H1 (cell line): ENCODE measurements at regions of chr11 and their contacts with region 1.

Region 1: GRCh38 chr11:34840736-34841386 is 75.3 kb downstream of the APIP start:
- DNase-seq: no peak
- H3K4me3 ChIP-seq: no peak overlapping the region
- H3K27ac ChIP-seq: no peak overlapping the region
- H3K4me1 ChIP-seq: peaks cover 0 to 4% (median 0%) of the 10 kb centered on the region in 4 experiments; a peak in 2 of 7 replicates
- H3K27me3 ChIP-seq: no peaks in the 10 kb centered on the region
- CTCF ChIP-seq: peak; percentile 60 to 84 (median 62)
- EP300 ChIP-seq: no peak
- POLR2A ChIP-seq: no peak
- RAD21 ChIP-seq: peak; percentile 51 to 57

Region 2: DNA sequence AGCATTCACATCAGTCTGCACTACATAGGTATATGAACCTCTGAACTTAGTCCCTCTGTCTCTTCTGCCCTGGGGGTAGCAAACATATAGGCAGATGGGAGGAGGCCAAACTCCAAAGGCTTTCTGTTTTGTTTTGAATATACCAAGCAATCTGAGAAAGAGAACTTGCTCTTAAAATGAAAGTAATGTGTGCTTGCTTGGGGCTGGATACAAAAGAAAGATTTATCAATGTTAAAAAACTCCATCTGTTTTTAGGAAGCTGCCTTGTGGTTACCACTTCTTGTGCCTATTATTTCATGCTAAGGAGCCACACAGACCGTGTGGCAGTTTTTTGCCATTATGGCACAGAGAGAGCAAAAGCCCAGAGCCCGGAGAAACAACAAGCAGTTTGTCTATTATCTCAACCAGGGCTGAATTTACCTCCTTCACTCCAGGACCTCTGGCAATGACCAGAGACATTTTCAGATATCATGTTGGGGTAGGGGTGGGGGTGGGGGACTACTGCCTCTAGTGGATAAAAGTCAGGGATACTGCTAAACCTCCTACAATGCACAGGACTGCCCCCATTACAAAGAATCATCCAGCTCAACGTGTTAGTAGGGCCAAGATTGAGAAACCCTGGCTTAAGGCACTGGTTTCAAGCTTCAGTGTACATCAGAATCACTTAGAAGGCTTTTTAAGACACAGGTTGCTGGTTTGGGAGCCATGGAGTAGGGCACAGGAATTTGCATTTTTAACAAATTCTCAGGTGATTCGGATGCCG is 48.9 kb before region 1 on chr11:
- CTCF ChIA-PET with region 1: interaction called, 17 read pairs
- POLR2A ChIA-PET with region 1: no interaction called
- DNase-seq: no peak
- H3K4me3 ChIP-seq: no peak overlapping the region
- H3K27ac ChIP-seq: no peak overlapping the region
- H3K4me1 ChIP-seq: peaks cover 0 to 5% (median 3%) of the 10 kb centered on the region in 4 experiments; a peak in 2 of 7 replicates
- H3K27me3 ChIP-seq: no peaks in the 10 kb centered on the region
- CTCF ChIP-seq: peak in 2 of 3 experiments; percentile 4 to 21; a peak in 1 of 4 replicates
- EP300 ChIP-seq: no peak
- POLR2A ChIP-seq: no peak
- RAD21 ChIP-seq: peak in 1 of 2 experiments; percentile 1; a peak in 1 of 4 replicates

Region 3: DNA sequence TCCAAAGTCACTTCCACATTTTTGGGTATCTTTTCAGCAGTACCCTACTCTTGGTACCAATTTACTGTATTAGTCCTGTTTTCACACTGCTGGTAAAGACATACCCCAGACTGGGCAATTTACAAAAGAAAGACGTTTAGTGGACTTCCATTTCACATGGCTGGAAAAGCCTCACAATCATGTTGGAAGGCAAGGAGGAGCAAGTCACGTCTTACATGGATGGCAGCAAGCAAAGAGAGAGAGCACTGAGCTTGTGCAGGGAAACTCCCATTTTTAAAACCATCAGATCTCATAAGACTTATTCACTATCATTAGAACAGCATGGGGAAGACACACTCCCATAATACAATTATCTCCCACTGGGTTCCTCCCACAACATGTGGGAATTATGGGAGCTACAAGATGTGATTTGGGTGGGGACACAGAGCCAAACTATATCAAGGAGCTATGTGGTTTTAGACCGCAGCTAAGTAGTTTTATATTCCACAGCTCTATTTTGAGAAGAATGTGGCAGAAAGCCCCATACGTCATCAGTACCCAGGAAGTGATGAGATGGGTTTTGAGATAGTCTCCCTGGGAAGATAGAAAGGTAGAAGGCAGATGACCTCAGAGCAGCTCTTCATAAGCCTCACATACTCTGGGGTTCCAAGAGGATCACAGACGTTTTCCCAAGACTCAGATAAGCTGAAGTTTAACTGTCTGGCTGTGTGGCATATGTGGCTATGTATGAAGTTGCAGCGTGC is 20.9 kb before region 1 on chr11:
- CTCF ChIA-PET with region 1: interaction called, 15 read pairs
- POLR2A ChIA-PET with region 1: no interaction called
- DNase-seq: no peak
- H3K4me3 ChIP-seq: no peak overlapping the region
- H3K27ac ChIP-seq: no peak overlapping the region
- H3K4me1 ChIP-seq: no peaks in the 10 kb centered on the region
- H3K27me3 ChIP-seq: no peaks in the 10 kb centered on the region
- CTCF ChIP-seq: no peak
- EP300 ChIP-seq: no peak
- POLR2A ChIP-seq: no peak
- RAD21 ChIP-seq: no peak

Region 4: GRCh38 chr11:34855021-34855753 is 14.3 kb after region 1 on chr11:
- CTCF ChIA-PET with region 1: interaction called, 23 read pairs
- POLR2A ChIA-PET with region 1: no interaction called
- DNase-seq: peak in 1 of 2 experiments; percentile 19
- H3K4me3 ChIP-seq: no peak overlapping the region
- H3K27ac ChIP-seq: no peak overlapping the region
- H3K4me1 ChIP-seq: peaks cover 0 to 3% (median 0%) of the 10 kb centered on the region in 4 experiments; a peak in 2 of 7 replicates
- H3K27me3 ChIP-seq: no peaks in the 10 kb centered on the region
- CTCF ChIP-seq: no peak
- EP300 ChIP-seq: no peak
- POLR2A ChIP-seq: no peak
- RAD21 ChIP-seq: no peak

Region 5: DNA sequence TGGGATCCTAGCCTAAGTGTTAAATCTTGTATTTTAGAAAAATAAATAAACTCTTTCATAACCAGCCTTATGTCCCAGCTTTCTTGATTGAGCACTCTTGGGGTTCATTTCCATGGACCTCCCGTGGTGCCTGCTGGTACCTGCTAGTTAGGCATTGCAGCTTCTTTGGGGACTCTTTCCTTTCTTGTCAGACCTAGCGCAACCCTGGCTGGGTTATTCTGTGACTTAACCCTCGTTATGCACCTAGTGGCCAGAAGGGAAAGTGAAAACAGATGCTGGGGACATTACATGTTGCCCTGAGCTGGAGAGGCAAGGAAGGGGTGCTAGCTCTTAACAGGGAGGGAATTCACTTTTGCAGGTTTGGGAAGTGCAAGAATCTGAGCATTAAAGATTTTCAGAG is 28.6 kb after region 1 on chr11:
- CTCF ChIA-PET with region 1: interaction called, 19 read pairs
- POLR2A ChIA-PET with region 1: no interaction called
- DNase-seq: peak in 1 of 2 experiments; percentile 51
- H3K4me3 ChIP-seq: no peak overlapping the region
- H3K27ac ChIP-seq: no peak overlapping the region
- H3K4me1 ChIP-seq: no peaks in the 10 kb centered on the region
- H3K27me3 ChIP-seq: no peaks in the 10 kb centered on the region
- CTCF ChIP-seq: peak; percentile 35 to 73 (median 44)
- EP300 ChIP-seq: no peak
- POLR2A ChIP-seq: no peak
- RAD21 ChIP-seq: peak; percentile 35 to 50

Region 6: DNA sequence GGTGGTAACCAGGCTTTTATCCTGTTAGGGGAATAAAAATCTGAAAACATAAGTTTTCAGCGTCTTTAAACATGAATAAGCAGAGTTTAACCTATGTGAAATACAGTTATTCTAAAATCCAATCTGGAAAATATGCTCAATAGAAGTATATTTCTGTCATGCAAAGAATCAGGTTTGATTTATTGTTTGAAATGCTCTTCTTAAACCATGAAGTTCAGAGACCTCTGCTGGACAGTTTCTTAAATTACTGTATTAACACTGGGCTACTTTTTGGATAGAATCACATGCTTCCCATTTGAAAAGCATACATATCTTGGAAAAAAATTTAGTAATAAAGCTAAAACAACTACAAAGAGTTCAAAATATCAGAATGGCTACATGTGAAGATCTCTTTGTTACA is 50.0 kb after region 1 on chr11:
- CTCF ChIA-PET with region 1: interaction called, 32 read pairs
- POLR2A ChIA-PET with region 1: no interaction called
- DNase-seq: no peak
- H3K4me3 ChIP-seq: no peak overlapping the region
- H3K27ac ChIP-seq: no peak overlapping the region
- H3K4me1 ChIP-seq: no peaks in the 10 kb centered on the region
- H3K27me3 ChIP-seq: no peaks in the 10 kb centered on the region
- CTCF ChIP-seq: peak in 1 of 3 experiments; percentile 29; a peak in 2 of 4 replicates
- EP300 ChIP-seq: no peak
- POLR2A ChIP-seq: no peak
- RAD21 ChIP-seq: peak; percentile 44 to 54

Region 7: DNA sequence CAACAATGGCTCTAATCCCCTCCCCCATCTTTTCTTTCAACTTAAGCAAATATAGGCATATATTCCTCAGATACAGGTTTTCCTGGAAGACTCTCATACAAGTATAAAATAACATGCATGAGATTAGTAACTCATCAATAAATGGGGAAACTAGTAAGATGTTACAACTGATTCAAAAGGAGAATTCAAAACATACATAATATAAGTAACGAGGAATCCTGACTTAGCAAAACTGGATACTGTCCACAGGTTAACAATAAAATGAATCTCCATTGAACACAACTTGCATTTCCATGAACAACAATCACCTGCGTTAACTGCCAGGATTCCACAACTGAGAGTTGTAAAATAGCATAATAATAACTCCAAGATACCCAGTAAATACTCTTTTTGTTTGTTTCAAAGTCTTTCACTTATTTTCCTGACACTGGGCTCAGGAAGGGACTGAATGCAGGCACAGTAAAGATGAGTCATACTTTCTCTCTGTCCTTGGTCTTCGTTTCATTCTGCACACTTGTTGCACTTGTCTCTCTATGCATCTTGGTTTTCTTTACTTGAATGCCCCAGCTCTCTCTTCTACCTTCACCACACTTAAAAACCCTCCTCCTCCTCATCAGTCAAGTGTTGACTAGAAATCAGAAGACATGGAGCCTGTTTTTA is 67.2 kb after region 1 on chr11:
- CTCF ChIA-PET with region 1: no interaction called
- POLR2A ChIA-PET with region 1: no interaction called
- DNase-seq: no peak
- H3K4me3 ChIP-seq: peak overlapping the region in 1 of 4 experiments; percentile 3; a peak in 1 of 8 replicates
- H3K27ac ChIP-seq: no peak overlapping the region
- H3K4me1 ChIP-seq: peaks cover 0 to 6% (median 2%) of the 10 kb centered on the region in 4 experiments; a peak in 3 of 7 replicates
- H3K27me3 ChIP-seq: no peaks in the 10 kb centered on the region
- CTCF ChIP-seq: no peak
- EP300 ChIP-seq: no peak
- POLR2A ChIP-seq: no peak
- RAD21 ChIP-seq: no peak

Region 8: GRCh38 chr11:34940026-34940677 is 99.3 kb after region 1 on chr11:
- CTCF ChIA-PET with region 1: no interaction called
- POLR2A ChIA-PET with region 1: no interaction called
- DNase-seq: no peak
- H3K4me3 ChIP-seq: no peak overlapping the region
- H3K27ac ChIP-seq: no peak overlapping the region
- H3K4me1 ChIP-seq: no peaks in the 10 kb centered on the region
- H3K27me3 ChIP-seq: no peaks in the 10 kb centered on the region
- CTCF ChIP-seq: no peak
- EP300 ChIP-seq: no peak
- POLR2A ChIP-seq: no peak
- RAD21 ChIP-seq: no peak

Region 9: GRCh38 chr11:34978236-34979191 is 137.7 kb after region 1 on chr11:
- CTCF ChIA-PET with region 1: no interaction called
- POLR2A ChIA-PET with region 1: no interaction called
- DNase-seq: no peak
- H3K4me3 ChIP-seq: no peak overlapping the region
- H3K27ac ChIP-seq: no peak overlapping the region
- H3K4me1 ChIP-seq: peaks cover 0 to 4% (median 0%) of the 10 kb centered on the region in 4 experiments; a peak in 2 of 7 replicates
- H3K27me3 ChIP-seq: no peaks in the 10 kb centered on the region
- CTCF ChIP-seq: no peak
- EP300 ChIP-seq: no peak
- POLR2A ChIP-seq: no peak
- RAD21 ChIP-seq: no peak

Region 10: GRCh38 chr11:35030716-35031213 is 189.9 kb after region 1 on chr11:
- CTCF ChIA-PET with region 1: no interaction called
- POLR2A ChIA-PET with region 1: no interaction called
- DNase-seq: no peak
- H3K4me3 ChIP-seq: no peak overlapping the region
- H3K27ac ChIP-seq: no peak overlapping the region
- H3K4me1 ChIP-seq: peaks cover 0 to 2% (median 0%) of the 10 kb centered on the region in 4 experiments; a peak in 1 of 7 replicates
- H3K27me3 ChIP-seq: peaks cover 0 to 1% (median 0%) of the 10 kb centered on the region in 4 experiments; a peak in 1 of 7 replicates
- CTCF ChIP-seq: no peak
- EP300 ChIP-seq: no peak
- POLR2A ChIP-seq: no peak
- RAD21 ChIP-seq: no peak